ENCODE measurements at regions of chr2 and their contacts with region 1.

Region 1: DNA sequence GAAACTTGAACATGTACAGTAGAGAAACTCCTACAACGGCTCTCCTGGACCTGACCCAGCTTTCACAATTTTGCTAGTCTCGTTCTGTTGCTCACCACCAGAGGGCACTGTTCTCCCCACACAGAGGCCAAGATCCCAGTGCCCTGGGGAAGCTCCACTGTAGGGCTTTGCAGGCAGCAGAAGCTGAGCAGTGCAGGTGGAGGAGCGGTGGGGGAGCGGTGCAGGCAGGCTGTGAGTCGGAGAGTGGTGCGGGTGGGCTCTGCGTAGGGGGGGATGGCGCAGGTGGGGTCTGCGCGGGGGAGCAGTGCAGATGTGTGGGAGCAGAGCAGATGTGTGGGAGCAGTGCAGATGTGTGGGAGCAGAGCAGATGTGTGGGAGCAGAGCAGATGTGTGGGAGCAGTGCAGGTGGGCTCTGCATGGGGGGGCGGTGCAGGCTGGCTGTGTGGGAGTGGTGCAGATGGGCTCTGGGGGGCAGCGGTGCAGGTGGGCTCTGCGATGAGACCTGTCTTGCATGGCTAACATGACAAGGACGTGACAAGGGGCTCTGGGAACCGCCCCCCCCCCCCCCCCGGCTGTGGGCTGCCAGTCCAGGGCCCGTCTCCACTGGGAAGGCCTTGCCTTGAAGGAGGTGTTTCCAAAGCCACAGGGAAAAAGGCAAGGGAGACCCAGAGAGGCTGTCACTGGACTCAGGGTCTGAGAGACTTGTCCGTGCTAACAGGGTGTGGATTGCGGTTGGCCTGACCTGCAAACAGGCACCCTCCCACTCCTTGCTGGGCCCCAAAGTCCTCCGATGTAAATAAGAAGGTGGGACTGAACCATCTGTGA is 7.3 kb downstream of the CYS1 start:
- DNase-seq: peak; percentile 83
- H3K4me3 ChIP-seq: no peak overlapping the region
- H3K27ac ChIP-seq: no peak overlapping the region
- H3K4me1 ChIP-seq: peaks cover 0 to 7% (median 3%) of the 10 kb centered on the region in 4 donors
- H3K27me3 ChIP-seq: peaks cover 41% of the 10 kb centered on the region
- CTCF ChIP-seq: peak; percentile 84 to 92 (median 87)
- EP300 ChIP-seq: no peak
- POLR2A ChIP-seq: no peak

Region 2: GRCh38 chr2:9799665-9800632 is 272.9 kb before region 1 on chr2:
- in situ Hi-C with region 1: loop called in 1 of 4 experiments (anchors 25 kb)
- intact Hi-C with region 1: no loop called
- DNase-seq: peak; percentile 92
- H3K4me3 ChIP-seq: peak overlapping the region in 1 of 4 donors; percentile 13
- H3K27ac ChIP-seq: peak overlapping the region; percentile 40 to 73 (median 60)
- H3K4me1 ChIP-seq: peaks cover 11 to 60% (median 32%) of the 10 kb centered on the region in 4 donors
- H3K27me3 ChIP-seq: no peaks in the 10 kb centered on the region
- CTCF ChIP-seq: peak; percentile 95 to 99 (median 96)
- EP300 ChIP-seq: no peak
- POLR2A ChIP-seq: no peak

Region 3: GRCh38 chr2:10097352-10098148 is 24.7 kb after region 1 on chr2:
- in situ Hi-C with region 1: no loop called
- intact Hi-C with region 1: no loop called
- DNase-seq: peak; percentile 75
- H3K4me3 ChIP-seq: no peak overlapping the region
- H3K27ac ChIP-seq: no peak overlapping the region
- H3K4me1 ChIP-seq: peaks cover 0 to 8% (median 0%) of the 10 kb centered on the region in 4 donors
- H3K27me3 ChIP-seq: peaks cover 6% of the 10 kb centered on the region
- CTCF ChIP-seq: peak; percentile 86 to 95 (median 89)
- EP300 ChIP-seq: no peak
- POLR2A ChIP-seq: no peak

Region 4: DNA sequence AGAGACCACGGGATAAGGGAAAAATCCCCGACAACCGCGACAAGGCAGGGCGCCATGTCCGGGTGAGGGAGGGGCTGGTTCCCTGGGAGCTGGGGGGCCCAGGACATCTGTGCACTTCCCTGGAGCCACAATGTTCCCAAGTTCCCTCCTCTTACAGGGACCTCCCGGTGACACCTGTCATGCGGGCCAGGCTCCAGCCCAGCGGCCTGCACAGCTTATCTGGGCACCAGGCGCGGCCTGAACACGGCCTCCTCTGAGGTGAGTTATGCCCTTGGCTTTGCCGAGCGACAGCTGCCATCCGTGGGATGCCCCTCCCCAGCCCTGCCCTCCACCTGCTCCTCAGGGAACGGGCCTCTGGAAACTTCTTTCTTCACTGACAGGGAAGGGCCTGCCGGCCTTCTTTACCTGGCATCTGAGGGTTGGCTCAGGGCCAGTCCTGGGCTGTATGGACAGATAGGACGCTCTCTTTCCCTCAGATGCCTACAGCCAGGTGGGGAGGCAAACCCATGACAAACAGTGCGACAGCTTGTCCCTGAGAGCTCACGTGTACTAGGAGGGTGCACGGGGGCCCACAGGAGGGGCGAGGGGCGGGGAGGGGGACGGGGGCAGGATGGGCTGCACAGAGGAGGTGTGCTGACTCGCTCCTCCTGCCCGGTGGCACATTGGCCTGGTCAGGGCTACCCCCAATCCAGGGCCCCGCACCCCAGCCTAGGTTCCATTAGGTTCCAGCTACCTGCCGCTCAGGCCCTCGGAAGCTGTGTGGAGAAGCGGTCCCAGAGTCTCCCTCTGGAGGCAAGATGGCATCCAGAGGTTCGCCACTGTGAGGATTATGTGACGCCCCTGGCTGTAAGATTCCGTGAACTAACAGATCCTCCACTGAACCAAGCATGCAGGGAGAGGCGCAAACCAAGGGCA is 194.9 kb after region 1 on chr2:
- in situ Hi-C with region 1: no loop called
- intact Hi-C with region 1: no loop called
- DNase-seq: peak; percentile 80
- H3K4me3 ChIP-seq: no peak overlapping the region
- H3K27ac ChIP-seq: peak overlapping the region; percentile 47 to 75 (median 58)
- H3K4me1 ChIP-seq: peaks cover 0 to 31% (median 16%) of the 10 kb centered on the region in 4 donors
- H3K27me3 ChIP-seq: no peaks in the 10 kb centered on the region
- CTCF ChIP-seq: no peak
- EP300 ChIP-seq: peak; percentile 28
- POLR2A ChIP-seq: no peak

Region 5: DNA sequence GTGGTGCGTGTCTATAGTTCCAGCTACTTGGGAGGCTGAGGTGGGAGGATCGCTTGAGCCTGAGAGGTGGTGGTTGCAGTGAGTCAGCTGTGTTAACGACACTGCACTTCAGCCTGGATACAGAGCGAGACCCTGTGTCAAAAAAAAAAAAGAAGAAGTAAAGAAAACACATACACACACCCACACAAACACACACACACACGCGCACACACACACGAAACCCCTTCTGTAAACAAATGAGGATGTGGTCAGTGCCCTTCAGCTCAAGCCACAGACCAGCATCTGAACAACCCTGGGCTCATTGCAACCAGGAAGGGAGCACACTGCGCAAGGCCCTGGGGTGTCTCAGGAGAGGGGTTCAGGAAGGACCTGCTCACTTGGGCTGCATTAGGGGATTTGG is 791.0 kb after region 1 on chr2:
- in situ Hi-C with region 1: no loop called
- intact Hi-C with region 1: no loop called
- DNase-seq: peak; percentile 24
- H3K4me3 ChIP-seq: no peak overlapping the region
- H3K27ac ChIP-seq: no peak overlapping the region
- H3K4me1 ChIP-seq: peaks cover 0 to 11% (median 5%) of the 10 kb centered on the region in 4 donors
- H3K27me3 ChIP-seq: peaks cover 5% of the 10 kb centered on the region
- CTCF ChIP-seq: no peak
- EP300 ChIP-seq: no peak
- POLR2A ChIP-seq: no peak